ENCODE measurements at regions of chr5 and their contacts with region 1.

Region 1: GRCh38 chr5:42889311-42889933 is 77.7 kb upstream of the SELENOP start:
- DNase-seq: peak; percentile 90
- ATAC-seq: peak; percentile 94

Region 2: GRCh38 chr5:42807722-42808447 is 81.5 kb before region 1 on chr5:
- intact Hi-C with region 1: loop called (anchors 10 kb)
- DNase-seq: no peak
- ATAC-seq: peak; percentile 14

Region 3: DNA sequence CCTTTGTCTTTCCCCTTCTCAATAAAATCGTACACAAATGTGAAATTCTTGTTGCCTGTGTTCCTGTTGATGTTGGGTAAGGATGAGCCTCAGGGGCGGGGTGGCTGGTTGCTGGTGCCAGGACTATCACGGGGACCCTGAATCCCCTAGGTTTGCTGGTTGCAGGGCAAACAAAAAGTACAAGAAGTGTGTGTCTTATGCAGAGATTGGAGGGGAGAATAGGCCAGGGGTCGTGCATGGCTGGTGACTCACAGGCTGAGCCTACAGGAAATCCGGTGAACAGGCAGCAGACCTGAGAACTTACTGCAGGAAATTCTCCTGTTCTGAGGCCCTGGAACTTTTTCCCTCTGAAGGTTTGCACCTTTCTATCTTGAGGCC is 145.2 kb after region 1 on chr5:
- intact Hi-C with region 1: no loop called
- DNase-seq: no peak
- ATAC-seq: no peak